Activated CD8-positive, alpha-beta memory T cell treated with anti-CD3 and anti-CD28 coated beads, Interleukin-2, amount 10 ng/mL, durations not matched to agents 7 days and 5 days (primary cell): ENCODE measurements at regions of chr12 and their contacts with region 1.

Region 1: DNA sequence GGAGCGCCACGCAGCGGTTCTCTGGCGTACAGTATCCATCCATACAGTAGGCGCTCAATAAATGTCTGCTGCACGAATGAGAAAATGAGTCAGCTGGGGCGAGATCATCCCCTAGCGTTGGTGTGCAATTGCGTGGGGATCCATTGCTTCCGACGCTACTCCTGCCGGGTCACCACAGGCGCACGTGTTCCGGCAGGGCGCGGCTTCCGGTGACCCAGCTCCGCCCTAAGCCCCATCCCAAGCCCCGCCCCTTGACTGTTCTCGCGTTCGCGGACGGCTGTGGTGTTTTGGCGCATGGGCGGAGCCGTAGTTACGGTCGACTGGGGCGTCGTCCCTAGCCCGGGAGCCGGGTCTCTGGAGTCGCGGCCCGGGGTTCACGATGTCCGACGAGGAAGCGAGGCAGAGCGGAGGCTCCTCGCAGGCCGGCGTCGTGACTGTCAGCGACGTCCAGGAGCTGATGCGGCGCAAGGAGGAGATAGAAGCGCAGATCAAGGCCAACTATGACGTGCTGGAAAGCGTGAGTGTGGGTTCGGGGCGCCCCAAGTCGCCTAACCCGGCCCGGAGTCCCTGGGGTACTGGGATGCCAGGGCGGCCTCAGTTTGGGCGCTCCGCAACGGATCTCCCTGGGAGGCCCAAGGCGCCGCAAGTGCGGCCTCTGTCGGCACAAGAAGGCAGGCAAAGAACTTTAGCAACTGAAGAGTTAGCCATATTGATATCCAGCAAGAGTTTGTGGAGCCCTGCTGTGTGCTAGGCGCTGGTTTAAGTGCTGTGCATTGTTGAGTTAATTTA is at the start of gene PSMD9:
- DNase-seq: peak; percentile 99
- ATAC-seq: peak; percentile 94
- H3K4me3 Mint-ChIP-seq: peak within 1 kb of the TSS; percentile 98
- H3K27ac Mint-ChIP-seq: peak within 1 kb of the TSS; percentile 98
- H3K4me1 Mint-ChIP-seq: peaks cover 40% of the 10 kb centered on the region
- H3K27me3 Mint-ChIP-seq: peaks cover 2% of the 10 kb centered on the region
- total RNA-seq, gene PSMD9: 61.9 to 63.5 TPM

Region 2: GRCh38 chr12:121802846-121803630 is 85.6 kb before region 1 on chr12:
- CTCF ChIA-PET with region 1: interaction called, 17 read pairs
- DNase-seq: peak; percentile 95
- ATAC-seq: peak; percentile 68
- H3K4me3 Mint-ChIP-seq: peak overlapping the region; percentile 89
- H3K27ac Mint-ChIP-seq: peak overlapping the region; percentile 100
- H3K4me1 Mint-ChIP-seq: peaks cover 34% of the 10 kb centered on the region
- H3K27me3 Mint-ChIP-seq: no peaks in the 10 kb centered on the region

Region 3: DNA sequence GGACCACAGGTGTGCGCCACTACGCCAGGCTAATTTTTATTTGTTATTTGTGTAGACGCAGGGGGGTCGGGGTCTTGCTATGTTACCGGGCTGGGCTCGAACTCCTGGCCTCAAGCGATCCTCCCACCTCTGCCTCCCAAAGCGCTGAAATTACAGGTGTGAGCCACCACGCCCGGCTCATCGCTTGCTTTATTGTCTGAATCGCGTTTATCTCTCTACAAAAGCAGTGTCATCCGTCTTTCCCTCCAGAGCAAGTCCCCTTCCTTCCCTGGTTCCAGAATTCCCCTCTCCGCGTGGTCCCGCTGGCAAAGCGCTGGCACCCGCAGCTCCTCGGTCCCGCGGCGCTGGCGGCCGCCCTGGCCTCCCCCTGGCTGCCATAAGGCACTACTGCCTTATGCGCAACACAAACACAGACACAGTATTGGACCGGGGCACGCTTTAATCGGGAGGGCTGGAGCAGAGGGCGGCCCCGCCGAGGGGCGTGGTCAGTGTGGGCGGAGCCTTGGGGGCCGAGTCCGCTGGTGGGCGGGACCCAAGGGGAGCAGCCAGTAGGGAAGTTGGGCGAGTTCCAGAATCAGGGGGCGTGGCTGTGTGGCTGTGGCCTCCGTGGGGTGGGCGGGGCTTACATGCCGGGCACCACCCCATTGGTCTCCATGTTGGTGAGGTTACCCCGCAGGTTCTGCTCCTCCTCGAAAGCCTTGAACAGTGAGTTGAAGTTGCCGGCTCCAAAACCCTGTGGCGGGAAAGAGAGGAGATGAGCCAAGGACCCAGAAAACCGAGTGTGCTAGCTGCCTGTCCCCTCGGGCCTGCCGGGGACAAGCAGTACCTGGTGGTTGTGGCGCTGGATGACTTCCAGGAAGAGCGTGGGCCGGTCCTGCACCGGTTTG is 49.3 kb before region 1 on chr12:
- CTCF ChIA-PET with region 1: interaction called, 16 read pairs
- DNase-seq: peak; percentile 99
- ATAC-seq: peak; percentile 93
- H3K4me3 Mint-ChIP-seq: peak overlapping the region; percentile 98
- H3K27ac Mint-ChIP-seq: peak overlapping the region; percentile 87
- H3K4me1 Mint-ChIP-seq: peaks cover 19% of the 10 kb centered on the region
- H3K27me3 Mint-ChIP-seq: peaks cover 3% of the 10 kb centered on the region

Region 4: DNA sequence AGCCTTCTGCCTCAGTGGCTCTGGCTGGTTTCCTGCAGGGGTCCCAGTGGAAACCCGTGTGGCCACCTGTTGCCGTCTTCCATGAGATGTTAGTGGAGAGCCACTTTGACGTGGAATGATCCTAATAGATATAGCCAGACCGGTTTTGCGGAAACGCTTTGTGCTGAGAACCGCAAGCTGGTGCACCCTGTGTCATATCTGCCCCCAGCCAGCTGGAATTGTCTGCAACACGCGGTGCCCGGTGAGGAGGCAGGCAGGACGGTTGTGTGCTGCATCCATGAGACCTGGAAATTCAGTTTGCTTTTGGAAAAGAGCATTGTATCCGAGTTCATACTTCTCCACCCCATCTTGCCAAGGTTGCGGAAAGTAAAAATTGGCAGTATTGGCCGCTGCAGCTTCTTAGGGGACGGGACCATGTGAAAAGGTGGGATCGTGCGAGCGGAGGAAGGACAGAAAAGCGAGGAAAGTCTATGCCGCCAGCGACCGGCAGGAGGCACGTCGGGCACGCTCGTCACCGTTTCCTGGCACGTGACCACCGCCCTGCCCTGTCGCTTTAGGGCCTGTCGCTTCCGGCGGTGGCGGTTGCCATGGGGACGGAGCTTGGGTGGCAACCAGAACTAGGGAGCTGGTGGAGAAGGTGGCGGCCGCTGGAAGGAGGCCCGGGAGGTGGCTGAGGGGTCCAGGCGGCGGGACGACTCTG is 29.5 kb after region 1 on chr12 and contains the start of gene CFAP251:
- CTCF ChIA-PET with region 1: interaction called, 33 read pairs
- DNase-seq: peak; percentile 98
- ATAC-seq: peak; percentile 97
- H3K4me3 Mint-ChIP-seq: peak within 1 kb of the TSS; percentile 72
- H3K27ac Mint-ChIP-seq: peak within 1 kb of the TSS; percentile 87
- H3K4me1 Mint-ChIP-seq: peaks cover 14% of the 10 kb centered on the region
- H3K27me3 Mint-ChIP-seq: no peaks in the 10 kb centered on the region
- total RNA-seq, gene CFAP251: 0.21 to 0.35 TPM